Tibial artery (tissue), 4 donors: ENCODE measurements at regions of chr21 and their contacts with region 1.

Region 1: DNA sequence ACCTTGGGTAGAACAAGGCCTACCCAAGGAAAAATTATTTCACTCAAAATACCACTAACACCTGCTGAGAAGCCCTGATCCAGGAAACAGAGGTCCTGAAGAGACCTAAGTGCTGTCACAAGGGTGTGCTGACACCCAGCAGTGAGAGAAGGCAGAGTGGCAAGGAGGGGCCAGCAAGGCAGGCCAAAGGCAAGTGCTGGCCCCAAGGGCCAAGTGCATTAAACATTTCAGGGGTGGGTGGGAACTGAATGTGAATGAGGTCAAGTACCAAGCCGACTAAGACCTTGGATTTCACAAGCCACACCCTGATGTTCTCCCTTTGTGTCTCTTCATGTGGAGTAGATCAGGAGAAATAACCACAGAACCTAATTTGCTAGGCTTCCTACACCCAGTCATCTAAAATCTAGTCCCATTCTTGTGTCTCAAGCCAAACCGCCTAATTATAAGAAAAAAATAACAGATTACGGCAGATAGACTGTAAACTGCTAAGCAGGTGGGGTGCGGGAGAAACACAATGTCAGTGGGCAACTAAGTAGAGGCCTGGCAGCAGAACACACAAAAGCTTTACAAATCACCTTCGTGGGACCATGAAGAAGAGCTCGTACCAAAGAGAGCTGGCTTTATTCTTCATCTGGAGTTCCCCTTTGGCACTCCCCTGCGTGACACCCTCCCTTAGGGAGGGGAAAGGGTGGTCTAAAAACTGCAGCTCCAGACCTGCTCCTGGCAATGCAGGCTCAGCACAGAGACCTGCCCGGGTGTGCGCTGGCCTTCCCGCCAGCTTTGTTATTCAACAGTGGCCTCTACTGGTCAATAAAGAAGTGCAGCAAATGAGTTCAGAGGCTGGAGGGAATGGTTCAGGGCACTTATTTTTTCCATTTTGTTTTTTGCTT is 8.7 kb downstream of the UBE2G2 start:
- DNase-seq: no peak
- H3K4me3 ChIP-seq: no peak overlapping the region
- H3K27ac ChIP-seq: no peak overlapping the region
- H3K4me1 ChIP-seq: peaks cover 0 to 10% (median 0%) of the 10 kb centered on the region in 4 donors
- H3K27me3 ChIP-seq: no peaks in the 10 kb centered on the region
- CTCF ChIP-seq: peak; percentile 68 to 74

Region 2: GRCh38 chr21:44299458-44300261 is 493.3 kb before region 1 on chr21 and contains the start of gene PFKL:
- intact Hi-C with region 1: loop called (anchors 10 kb)
- DNase-seq: peak; percentile 42 to 83
- H3K4me3 ChIP-seq: peak within 1 kb of the TSS; percentile 83 to 98
- H3K27ac ChIP-seq: peak within 1 kb of the TSS; percentile 85 to 92
- H3K4me1 ChIP-seq: peaks cover 0 to 64% (median 42%) of the 10 kb centered on the region in 4 donors
- H3K27me3 ChIP-seq: peaks cover 0 to 27% of the 10 kb centered on the region in 2 donors
- CTCF ChIP-seq: peak in 1 of 2 experiments; percentile 17